ENCODE measurements at regions of chr3 and their contacts with region 1.

Region 1: DNA sequence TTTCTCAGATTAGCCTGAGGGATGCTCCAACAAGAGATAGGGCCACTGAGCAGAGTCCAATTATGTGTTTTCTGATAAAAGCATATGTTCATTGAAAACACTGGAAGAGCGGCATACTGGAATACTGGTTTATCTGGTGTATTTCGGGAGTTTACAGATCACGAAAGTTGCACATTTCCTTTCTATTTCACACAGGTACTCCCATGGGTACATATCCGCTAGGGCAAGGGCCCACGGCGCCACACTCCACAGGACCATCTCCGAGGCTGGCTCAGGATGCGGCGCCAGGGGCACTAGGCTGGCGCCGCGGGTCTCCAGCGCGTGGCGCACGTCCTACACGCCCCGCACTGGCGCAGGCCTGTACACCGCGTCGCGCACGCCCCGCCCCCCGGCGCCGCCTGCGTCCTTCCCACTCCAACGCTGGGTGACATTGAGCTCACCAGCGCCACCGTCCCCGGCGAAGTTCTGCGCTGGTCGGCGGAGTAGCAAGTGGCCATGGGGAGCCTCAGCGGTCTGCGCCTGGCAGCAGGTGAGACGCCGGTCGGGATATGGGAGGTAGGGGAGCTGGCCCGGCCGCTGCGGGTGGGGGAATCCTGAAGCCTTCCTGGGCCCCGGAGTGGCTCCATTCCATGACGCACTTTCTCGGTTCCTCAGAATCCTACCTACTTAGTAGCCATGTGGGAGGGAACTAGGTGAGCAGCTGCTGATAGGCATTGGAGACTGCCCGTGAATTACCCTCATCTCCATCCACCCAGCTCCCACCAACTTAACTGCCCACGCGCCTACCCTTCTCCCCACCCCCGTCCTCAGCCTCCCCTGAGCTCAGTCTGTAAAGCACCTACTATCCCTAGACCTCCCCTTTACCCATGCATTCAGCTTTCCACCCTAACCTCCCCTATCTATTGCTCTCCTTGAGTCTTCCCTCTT is at the start of gene FAM162A:
- DNase-seq: peak; percentile 84 to 92
- H3K4me3 ChIP-seq: peak within 1 kb of the TSS; percentile 78 to 96 (median 94)
- H3K27ac ChIP-seq: peak within 1 kb of the TSS; percentile 80
- H3K4me1 ChIP-seq: peaks cover 0 to 6% (median 3%) of the 10 kb centered on the region in 4 experiments; a peak in 4 of 7 replicates
- H3K27me3 ChIP-seq: no peaks in the 10 kb centered on the region
- CTCF ChIP-seq: peak; percentile 52 to 70 (median 53)
- EP300 ChIP-seq: no peak
- POLR2A ChIP-seq: peak in 1 of 2 experiments; percentile 79; a peak in 1 of 3 replicates
- RAD21 ChIP-seq: peak; percentile 21 to 23; a peak in 2 of 4 replicates
- total RNA-seq, gene FAM162A: 54.1 and 59.7 TPM in 2 replicates

Region 2: DNA sequence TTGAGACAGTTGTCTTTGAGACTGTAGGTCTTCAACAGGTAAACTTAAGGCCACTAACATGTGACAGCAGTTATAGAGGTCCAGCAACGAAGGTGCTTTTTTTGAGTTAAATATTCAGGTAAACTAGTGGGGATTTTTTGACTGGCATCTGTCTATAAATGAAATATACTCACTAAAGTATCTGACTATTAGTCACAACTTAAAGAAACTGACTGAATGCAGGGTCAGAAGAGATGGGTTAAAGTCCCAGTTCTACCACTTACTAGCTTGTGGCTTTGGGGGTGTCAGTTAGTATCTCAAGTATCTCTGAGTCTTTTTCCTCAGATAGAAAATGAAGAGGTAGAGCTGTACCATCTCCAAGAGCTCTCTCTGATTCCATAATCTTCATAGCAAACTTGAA is 19.0 kb before region 1 on chr3:
- CTCF ChIA-PET with region 1: interaction called, 3 read pairs
- POLR2A ChIA-PET with region 1: interaction called, 14 read pairs
- DNase-seq: no peak
- H3K4me3 ChIP-seq: no peak overlapping the region
- H3K27ac ChIP-seq: no peak overlapping the region
- H3K4me1 ChIP-seq: no peaks in the 10 kb centered on the region
- H3K27me3 ChIP-seq: no peaks in the 10 kb centered on the region
- CTCF ChIP-seq: no peak
- EP300 ChIP-seq: no peak
- POLR2A ChIP-seq: no peak
- RAD21 ChIP-seq: no peak

Region 3: GRCh38 chr3:122880624-122881023 is 496.6 kb after region 1 on chr3:
- CTCF ChIA-PET with region 1: no interaction called
- POLR2A ChIA-PET with region 1: no interaction called
- DNase-seq: no peak
- H3K4me3 ChIP-seq: no peak overlapping the region
- H3K27ac ChIP-seq: no peak overlapping the region
- H3K4me1 ChIP-seq: no peaks in the 10 kb centered on the region
- H3K27me3 ChIP-seq: no peaks in the 10 kb centered on the region
- CTCF ChIP-seq: peak in 1 of 3 experiments; percentile 18; a peak in 1 of 4 replicates
- EP300 ChIP-seq: no peak
- POLR2A ChIP-seq: no peak
- RAD21 ChIP-seq: no peak; a peak in 1 of 4 replicates